ENCODE measurements at regions of chr1 and their contacts with region 1.

Region 1: GRCh38 chr1:32179443-32180185 is at the start of gene TXLNA:
- DNase-seq: peak; percentile 93
- ATAC-seq: peak; percentile 91
- H3K4me3 Mint-ChIP-seq: peak within 1 kb of the TSS; percentile 95
- H3K27ac Mint-ChIP-seq: peak within 1 kb of the TSS; percentile 99
- H3K4me1 Mint-ChIP-seq: peaks cover 45% of the 10 kb centered on the region
- H3K27me3 Mint-ChIP-seq: no peaks in the 10 kb centered on the region
- total RNA-seq, gene TXLNA: 79.7 to 79.8 TPM

Region 2: DNA sequence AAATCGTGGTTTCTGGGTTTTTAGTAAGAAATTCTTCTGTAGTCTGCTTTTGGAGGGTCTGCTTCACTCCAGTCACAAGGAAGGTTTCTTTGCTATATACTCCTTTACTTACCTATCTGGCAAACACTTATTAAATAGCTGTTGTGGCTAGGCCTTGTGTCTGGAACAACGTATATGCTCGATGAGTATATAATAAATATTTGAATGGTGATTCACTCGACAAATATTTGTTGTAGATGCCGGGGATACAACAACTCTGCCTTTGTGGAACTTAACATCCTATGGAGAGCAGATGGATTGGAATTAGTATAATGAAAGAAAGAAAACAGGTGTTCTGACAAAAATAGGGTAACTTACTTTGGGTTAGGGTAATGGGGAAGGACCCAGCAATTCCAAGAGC is 40.7 kb before region 1 on chr1:
- CTCF ChIA-PET with region 1: no interaction called
- POLR2A ChIA-PET with region 1: no interaction called
- DNase-seq: no peak
- ATAC-seq: no peak
- H3K4me3 Mint-ChIP-seq: no peak overlapping the region
- H3K27ac Mint-ChIP-seq: peak overlapping the region; percentile 21
- H3K4me1 Mint-ChIP-seq: peaks cover 29% of the 10 kb centered on the region
- H3K27me3 Mint-ChIP-seq: no peaks in the 10 kb centered on the region

Region 3: GRCh38 chr1:32200226-32201010 is 20.8 kb after region 1 on chr1 and contains the start of gene CCDC28B:
- CTCF ChIA-PET with region 1: interaction called, 6 read pairs
- POLR2A ChIA-PET with region 1: interaction called, 20 read pairs
- DNase-seq: peak; percentile 72
- ATAC-seq: peak; percentile 55
- H3K4me3 Mint-ChIP-seq: peak within 1 kb of the TSS; percentile 92
- H3K27ac Mint-ChIP-seq: peak within 1 kb of the TSS; percentile 76
- H3K4me1 Mint-ChIP-seq: peaks cover 78% of the 10 kb centered on the region
- H3K27me3 Mint-ChIP-seq: no peaks in the 10 kb centered on the region
- total RNA-seq, gene CCDC28B: 71.4 to 72.8 TPM